ENCODE measurements at regions of chr9 and their contacts with region 1.

Region 1: GRCh38 chr9:132240753-132241493 is 79.1 kb downstream of the NTNG2 start:
- DNase-seq: peak; percentile 100
- ATAC-seq: peak; percentile 93
- H3K4me3 Mint-ChIP-seq: peak overlapping the region; percentile 89
- H3K27ac Mint-ChIP-seq: 0 out of 2 replicates have a peak overlapping the region, but pooled peaks have one; percentile 45
- H3K4me1 Mint-ChIP-seq: peaks cover 25% of the 10 kb centered on the region
- H3K27me3 Mint-ChIP-seq: peaks cover 39% of the 10 kb centered on the region
- CTCF ChIP-seq: no peak

Region 2: DNA sequence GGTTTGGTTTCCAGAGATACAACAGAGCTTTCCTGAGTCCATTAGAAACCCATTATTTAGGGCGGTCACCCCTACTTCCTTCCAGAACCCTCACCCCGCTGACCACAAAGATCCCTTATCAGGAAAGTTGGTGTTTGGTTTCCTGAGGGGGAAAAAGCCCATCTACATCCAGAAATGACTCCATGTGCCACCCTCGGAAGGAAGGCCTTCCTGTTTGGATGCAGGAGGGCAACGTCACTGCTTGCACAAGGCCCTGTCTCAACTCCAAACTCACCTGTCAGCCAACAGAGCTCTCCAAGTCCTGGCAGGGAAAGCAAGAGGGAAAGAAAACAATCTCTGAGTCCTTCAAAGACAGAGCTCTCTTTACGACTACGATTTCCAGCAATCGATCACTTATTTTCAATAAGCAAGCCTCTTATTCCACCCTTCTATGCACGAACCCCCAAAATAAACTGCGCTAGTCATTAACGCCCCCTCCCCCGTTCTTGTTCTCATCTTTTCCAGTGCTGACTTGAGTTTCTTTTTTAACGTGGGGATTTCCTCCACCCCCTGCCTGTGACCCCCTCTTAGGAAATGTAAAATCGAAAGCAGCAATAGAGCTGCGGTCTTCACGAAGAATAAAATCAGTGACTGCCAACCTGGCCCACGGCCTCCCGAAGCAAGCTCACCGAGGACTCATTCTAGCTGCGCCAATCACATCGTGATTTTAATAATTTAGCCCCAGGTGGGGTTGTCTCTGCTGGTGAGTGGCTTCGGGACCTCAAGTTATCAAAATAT is 114.8 kb before region 1 on chr9:
- CTCF ChIA-PET with region 1: interaction called, 13 read pairs
- POLR2A ChIA-PET with region 1: no interaction called
- DNase-seq: no peak
- ATAC-seq: no peak
- H3K4me3 Mint-ChIP-seq: peak overlapping the region; percentile 41
- H3K27ac Mint-ChIP-seq: peak overlapping the region; percentile 60
- H3K4me1 Mint-ChIP-seq: peaks cover 70% of the 10 kb centered on the region
- H3K27me3 Mint-ChIP-seq: peaks cover 14% of the 10 kb centered on the region
- CTCF ChIP-seq: no peak

Region 3: DNA sequence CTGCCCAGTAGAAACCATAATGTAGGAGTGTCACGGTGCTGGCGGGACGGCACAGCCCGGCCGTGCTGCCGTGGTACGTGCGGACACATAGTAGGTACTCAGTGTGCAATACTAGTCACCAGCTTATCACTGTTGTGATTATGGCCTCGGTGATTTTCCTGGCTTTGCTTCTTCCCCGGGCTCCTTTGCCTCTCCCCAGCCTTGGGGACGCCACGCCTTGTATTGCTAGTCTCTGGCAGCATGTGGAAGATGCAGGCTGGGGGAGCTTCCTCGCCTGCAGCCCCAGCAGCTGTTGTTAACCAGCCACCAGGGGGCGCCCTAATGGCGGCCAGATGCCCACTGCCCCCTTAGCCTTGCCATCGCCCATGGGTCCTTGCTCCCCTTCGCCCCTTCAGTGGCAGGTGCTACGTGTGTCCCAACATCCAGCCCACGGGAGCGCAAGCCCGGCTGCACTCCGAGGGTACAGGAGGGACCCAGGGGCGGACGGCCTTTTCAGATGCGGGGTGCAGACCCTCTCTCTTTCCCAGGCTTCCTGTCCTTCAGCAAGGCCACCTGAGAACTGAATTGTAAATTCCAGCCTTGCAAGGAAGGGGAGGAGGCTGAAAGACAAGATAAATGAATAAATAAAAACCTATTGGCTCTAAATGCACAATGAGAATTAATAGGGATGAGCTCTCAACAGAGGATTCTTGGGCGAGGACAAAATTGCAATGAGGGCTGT is 71.1 kb before region 1 on chr9:
- CTCF ChIA-PET with region 1: interaction called, 343 read pairs
- POLR2A ChIA-PET with region 1: interaction called, 3 read pairs
- DNase-seq: peak; percentile 83
- ATAC-seq: peak; percentile 71
- H3K4me3 Mint-ChIP-seq: no peak overlapping the region
- H3K27ac Mint-ChIP-seq: no peak overlapping the region
- H3K4me1 Mint-ChIP-seq: peaks cover 16% of the 10 kb centered on the region
- H3K27me3 Mint-ChIP-seq: peaks cover 23% of the 10 kb centered on the region
- CTCF ChIP-seq: peak; percentile 97

Region 4: DNA sequence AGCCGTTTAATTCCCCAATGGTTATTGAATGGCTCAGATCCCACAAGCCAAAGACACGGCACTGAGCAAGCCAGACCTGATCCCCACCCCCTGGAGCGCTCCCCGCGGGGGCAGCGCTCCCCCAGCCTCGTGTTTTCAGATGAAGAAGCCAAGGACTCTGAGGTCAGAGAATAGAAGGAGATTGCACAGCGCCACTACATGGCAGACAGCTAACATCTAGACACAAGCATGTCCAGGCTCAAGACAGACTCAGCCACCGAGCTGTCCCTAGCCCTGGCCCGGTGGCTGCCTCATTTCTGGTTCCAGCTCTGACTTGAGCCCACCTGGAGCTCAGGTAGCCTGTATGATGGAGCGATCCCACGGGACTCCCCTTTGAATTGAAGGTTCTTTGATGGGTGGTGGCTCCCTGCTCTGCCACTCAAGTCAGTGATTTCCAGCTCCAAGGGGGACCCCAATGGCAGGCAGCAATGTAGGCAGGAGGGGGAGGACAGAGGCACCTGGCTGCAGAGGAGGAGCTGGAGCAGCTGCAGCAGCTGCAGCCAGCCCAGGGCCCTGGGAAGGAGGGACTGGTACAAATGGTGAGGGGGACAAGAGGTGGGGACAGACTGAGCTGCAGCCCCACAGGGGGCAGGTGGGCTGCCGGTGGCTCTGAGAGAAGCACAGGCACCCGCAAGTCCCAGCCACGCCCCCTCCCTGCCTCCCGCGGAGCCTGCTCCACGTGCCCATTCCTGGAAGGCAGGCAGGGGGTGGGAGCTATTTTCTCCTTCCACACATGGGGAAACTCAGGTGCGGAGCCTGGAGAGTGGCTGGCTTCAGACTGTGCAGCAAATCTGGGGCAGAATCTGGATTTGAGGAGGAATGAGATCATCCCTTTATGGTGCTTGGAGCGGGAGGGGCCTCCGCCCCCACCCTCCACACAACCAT is 38.9 kb before region 1 on chr9:
- CTCF ChIA-PET with region 1: interaction called, 20 read pairs
- POLR2A ChIA-PET with region 1: no interaction called
- DNase-seq: no peak
- ATAC-seq: peak; percentile 28
- H3K4me3 Mint-ChIP-seq: no peak overlapping the region
- H3K27ac Mint-ChIP-seq: no peak overlapping the region
- H3K4me1 Mint-ChIP-seq: peaks cover 4% of the 10 kb centered on the region; the same call in 1 of the 2 replicates
- H3K27me3 Mint-ChIP-seq: no peaks in the 10 kb centered on the region; the same call in 1 of the 2 replicates
- CTCF ChIP-seq: no peak

Region 5: GRCh38 chr9:132260846-132261245 is 19.9 kb after region 1 on chr9:
- CTCF ChIA-PET with region 1: interaction called, 21 read pairs
- POLR2A ChIA-PET with region 1: no interaction called
- DNase-seq: no peak
- ATAC-seq: no peak
- H3K4me3 Mint-ChIP-seq: no peak overlapping the region
- H3K27ac Mint-ChIP-seq: no peak overlapping the region
- H3K4me1 Mint-ChIP-seq: no peaks in the 10 kb centered on the region
- H3K27me3 Mint-ChIP-seq: no peaks in the 10 kb centered on the region
- CTCF ChIP-seq: no peak

Measured in WTC11 (cell line).